ENCODE measurements at regions of chr20 and their contacts with region 1.

Region 1: GRCh38 chr20:760751-761417 is 7.4 kb downstream of the SLC52A3 start:
- H3K4me3 ChIP-seq: no peak overlapping the region
- H3K27ac ChIP-seq: no peak overlapping the region
- H3K4me1 ChIP-seq: no peaks in the 10 kb centered on the region
- CTCF ChIP-seq: peak; percentile 93

Region 2: GRCh38 chr20:595330-596308 is 165.3 kb before region 1 on chr20:
- CTCF ChIA-PET with region 1: no interaction called
- POLR2A ChIA-PET with region 1: no interaction called
- H3K4me3 ChIP-seq: no peak overlapping the region
- H3K27ac ChIP-seq: no peak overlapping the region
- H3K4me1 ChIP-seq: no peaks in the 10 kb centered on the region
- CTCF ChIP-seq: no peak

Region 3: DNA sequence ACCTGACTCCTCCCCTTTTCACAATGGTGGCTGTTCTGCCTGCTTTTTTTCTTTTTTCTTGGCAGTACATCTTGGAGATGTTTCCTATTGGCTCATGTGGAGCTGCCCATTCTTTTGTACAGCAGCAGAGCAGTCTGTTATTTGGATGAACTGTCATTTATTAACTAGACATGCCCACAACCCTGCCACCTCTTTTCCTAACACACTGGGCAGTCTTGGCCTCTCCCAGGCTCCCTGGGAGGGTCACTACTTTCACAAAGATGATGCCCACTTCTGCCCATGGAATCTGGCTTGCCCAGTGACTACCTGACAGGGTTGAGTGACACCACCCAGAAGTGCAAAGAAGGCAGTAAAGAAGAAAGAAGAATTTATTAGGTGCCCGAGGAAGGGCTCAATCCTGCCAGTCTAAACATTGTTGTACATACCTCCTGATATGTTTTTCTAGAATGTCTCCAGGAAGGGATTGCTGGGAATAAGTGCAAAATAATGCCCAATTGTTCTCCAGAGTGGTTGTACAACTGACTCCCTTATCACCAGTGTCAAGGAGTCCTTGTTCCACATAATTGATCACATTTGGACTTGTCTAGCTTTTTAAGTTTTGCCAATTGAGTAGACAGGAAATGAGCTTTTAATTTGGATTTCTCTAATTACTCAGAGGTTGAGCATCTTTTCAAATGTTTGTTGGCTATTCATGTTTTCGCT is 65.6 kb before region 1 on chr20:
- CTCF ChIA-PET with region 1: no interaction called
- POLR2A ChIA-PET with region 1: no interaction called
- H3K4me3 ChIP-seq: no peak overlapping the region
- H3K27ac ChIP-seq: no peak overlapping the region
- H3K4me1 ChIP-seq: no peaks in the 10 kb centered on the region
- CTCF ChIP-seq: no peak

Region 4: GRCh38 chr20:750801-751200 is 10.1 kb before region 1 on chr20:
- CTCF ChIA-PET with region 1: interaction called, 14 read pairs
- POLR2A ChIA-PET with region 1: no interaction called
- H3K4me3 ChIP-seq: no peak overlapping the region
- H3K27ac ChIP-seq: no peak overlapping the region
- H3K4me1 ChIP-seq: no peaks in the 10 kb centered on the region
- CTCF ChIP-seq: no peak

Region 5: DNA sequence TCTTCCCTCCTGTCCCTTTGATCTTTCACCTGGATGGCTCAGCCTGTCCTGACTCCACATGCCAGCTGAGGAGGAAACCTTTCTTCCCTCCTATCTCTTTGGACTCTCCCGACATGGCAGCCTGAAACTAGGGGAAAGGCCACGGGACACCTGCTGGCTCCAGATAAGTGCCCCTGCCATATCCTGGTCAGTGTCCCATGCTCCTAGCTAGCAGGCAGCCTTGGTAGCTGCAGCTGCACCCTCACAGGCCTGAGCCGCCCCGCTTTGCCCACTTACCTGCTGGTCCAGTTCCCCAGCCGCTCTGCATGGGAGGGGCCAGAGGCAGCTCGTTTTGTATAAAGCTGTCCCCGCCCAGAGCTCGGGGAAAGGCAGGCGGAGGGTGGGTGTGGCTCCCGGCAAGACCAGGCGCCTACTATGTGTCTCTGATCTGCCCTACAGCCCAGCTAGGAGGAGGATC is 14.8 kb after region 1 on chr20:
- CTCF ChIA-PET with region 1: interaction called, 12 read pairs
- POLR2A ChIA-PET with region 1: no interaction called
- H3K4me3 ChIP-seq: no peak overlapping the region
- H3K27ac ChIP-seq: no peak overlapping the region
- H3K4me1 ChIP-seq: no peaks in the 10 kb centered on the region
- CTCF ChIP-seq: no peak

Region 6: DNA sequence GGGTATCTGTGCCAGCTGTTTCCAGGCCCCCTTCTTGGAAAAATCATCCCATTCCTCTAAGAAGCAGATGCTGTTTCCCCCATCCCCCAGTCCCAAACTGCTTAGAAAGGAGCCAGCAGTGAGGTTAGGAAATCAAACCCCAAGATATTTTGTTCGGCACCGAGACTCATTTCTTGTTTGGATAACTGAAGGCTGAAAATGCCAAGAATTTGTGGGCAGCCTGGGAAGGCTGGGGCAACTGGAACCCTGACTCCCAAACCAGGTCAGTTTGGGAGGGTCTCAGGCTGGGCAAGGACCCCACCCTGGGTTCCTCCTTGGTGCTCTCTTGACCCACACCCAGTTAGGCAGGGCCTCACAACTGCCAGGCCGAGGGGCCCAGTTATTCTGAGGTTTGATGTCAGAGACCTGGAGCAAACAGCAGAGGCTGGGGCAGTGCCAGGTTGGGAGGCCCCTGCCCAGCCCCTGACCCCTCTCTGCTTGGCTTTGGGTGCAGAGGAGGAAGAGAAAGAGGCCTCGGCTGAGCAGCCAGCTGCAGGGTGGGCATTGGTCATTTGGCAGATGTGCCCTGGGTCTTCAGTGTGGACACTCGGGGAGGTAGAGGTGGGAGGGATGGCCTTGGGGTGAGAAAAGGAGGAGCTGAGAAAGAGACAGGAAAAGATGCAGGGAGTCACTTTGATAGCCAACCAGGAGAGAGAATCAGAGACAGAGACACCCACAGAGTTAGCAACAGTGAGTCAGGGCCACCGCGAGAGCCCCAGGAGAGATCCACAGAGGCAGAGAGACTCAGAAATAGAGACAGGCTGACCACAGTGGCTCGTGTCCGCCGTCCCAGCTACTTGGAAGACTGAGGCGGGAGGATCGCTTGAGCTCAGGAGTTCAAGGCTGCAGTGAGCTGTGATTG is 150.2 kb after region 1 on chr20:
- CTCF ChIA-PET with region 1: no interaction called
- POLR2A ChIA-PET with region 1: no interaction called
- H3K4me3 ChIP-seq: no peak overlapping the region
- H3K27ac ChIP-seq: no peak overlapping the region
- H3K4me1 ChIP-seq: no peaks in the 10 kb centered on the region
- CTCF ChIP-seq: no peak